ENCODE measurements at regions of chr16 and their contacts with region 1.

Region 1: GRCh38 chr16:22151246-22151998 is 10.9 kb upstream of the SDR42E2 start:
- DNase-seq: no peak
- H3K4me3 ChIP-seq: no peak overlapping the region
- H3K27ac ChIP-seq: no peak overlapping the region
- H3K4me1 ChIP-seq: no peaks in the 10 kb centered on the region
- H3K27me3 ChIP-seq: no peaks in the 10 kb centered on the region
- CTCF ChIP-seq: no peak

Region 2: DNA sequence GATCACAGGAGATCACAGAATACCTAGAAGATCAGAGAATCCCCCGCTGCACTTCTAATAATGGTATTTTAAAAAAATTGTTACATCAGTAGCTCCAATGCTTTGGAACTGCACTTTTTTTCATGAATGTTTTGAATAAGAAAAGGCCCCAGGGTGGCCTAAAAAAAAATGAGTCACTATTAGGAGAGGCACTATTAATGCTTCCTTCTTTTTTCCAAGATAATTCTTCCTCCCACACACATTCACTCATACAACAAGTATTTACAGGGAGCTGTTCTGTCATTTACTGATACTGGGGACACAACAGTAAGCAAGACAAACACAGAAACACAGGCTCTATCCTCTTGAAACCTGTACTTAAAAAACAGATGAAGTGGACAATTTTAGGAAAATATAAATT is 149.8 kb before region 1 on chr16:
- CTCF ChIA-PET with region 1: no interaction called
- POLR2A ChIA-PET with region 1: interaction called, 16 read pairs
- intact Hi-C with region 1: no loop called
- DNase-seq: peak; percentile 34
- H3K4me3 ChIP-seq: no peak overlapping the region
- H3K27ac ChIP-seq: no peak overlapping the region
- H3K4me1 ChIP-seq: no peaks in the 10 kb centered on the region
- H3K27me3 ChIP-seq: no peaks in the 10 kb centered on the region
- CTCF ChIP-seq: no peak